ENCODE measurements at regions of chr15 and their contacts with region 1.

Region 1: DNA sequence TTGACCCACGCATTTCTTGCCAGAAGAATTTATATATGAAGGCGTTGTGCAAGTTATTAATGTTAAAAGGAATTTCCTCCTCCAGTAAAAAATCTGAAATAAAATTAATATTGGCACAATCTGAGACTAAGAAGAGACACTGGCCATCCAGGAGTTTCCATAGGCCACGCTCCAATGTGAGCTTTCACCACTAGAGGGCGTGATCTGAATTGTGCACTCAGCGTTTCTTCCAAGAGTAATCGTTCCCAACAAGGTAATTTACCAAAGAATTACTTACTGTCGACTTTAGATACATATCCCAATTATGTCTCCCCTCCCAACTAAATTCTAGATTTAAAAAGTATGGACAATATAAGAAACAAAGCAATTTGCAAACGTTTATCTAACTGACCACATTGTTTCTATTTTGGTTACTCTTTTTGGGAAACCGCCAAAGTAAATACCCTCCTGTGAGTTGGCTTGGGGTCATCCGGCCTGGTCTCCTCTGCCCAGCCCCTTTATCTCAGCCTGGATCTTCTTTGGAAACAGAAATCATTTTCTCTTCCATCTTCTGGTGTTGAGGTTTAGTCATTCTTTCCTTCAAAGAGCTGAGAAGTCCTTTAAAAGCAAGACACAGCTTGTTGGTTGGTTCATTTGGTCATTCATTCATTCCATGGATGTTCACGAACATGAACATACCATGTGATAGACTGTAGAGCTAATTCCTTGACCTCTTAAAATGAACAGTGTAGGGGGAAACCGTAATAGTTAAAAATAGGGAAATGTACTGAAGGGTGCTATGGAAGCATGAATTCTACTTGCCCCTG is 26.2 kb downstream of the POLR2M start:
- DNase-seq: peak in 1 of 2 experiments; percentile 80
- H3K4me3 ChIP-seq: no peak overlapping the region
- H3K27ac ChIP-seq: no peak overlapping the region
- H3K4me1 ChIP-seq: peaks cover 0 to 6% (median 0%) of the 10 kb centered on the region in 4 experiments; a peak in 1 of 7 replicates
- H3K27me3 ChIP-seq: no peaks in the 10 kb centered on the region
- CTCF ChIP-seq: peak; percentile 59 to 83 (median 76)
- EP300 ChIP-seq: no peak
- POLR2A ChIP-seq: no peak
- RAD21 ChIP-seq: peak; percentile 56 to 67

Region 2: GRCh38 chr15:57640935-57641682 is 91.6 kb before region 1 on chr15:
- CTCF ChIA-PET with region 1: interaction called, 10 read pairs
- POLR2A ChIA-PET with region 1: no interaction called
- DNase-seq: no peak
- H3K4me3 ChIP-seq: no peak overlapping the region
- H3K27ac ChIP-seq: no peak overlapping the region
- H3K4me1 ChIP-seq: no peaks in the 10 kb centered on the region
- H3K27me3 ChIP-seq: peaks cover 0 to 3% (median 0%) of the 10 kb centered on the region in 4 experiments; a peak in 2 of 7 replicates
- CTCF ChIP-seq: peak; percentile 50 to 61 (median 59)
- EP300 ChIP-seq: no peak
- POLR2A ChIP-seq: no peak
- RAD21 ChIP-seq: peak; percentile 22 to 45; a peak in 3 of 4 replicates

Region 3: GRCh38 chr15:57706405-57707209 is 26.1 kb before region 1 on chr15 and contains the start of gene POLR2M:
- CTCF ChIA-PET with region 1: interaction called, 15 read pairs
- POLR2A ChIA-PET with region 1: interaction called, 7 read pairs
- DNase-seq: peak; percentile 78 to 82
- H3K4me3 ChIP-seq: peak within 1 kb of the TSS; percentile 93 to 99 (median 96)
- H3K27ac ChIP-seq: peak within 1 kb of the TSS; percentile 85
- H3K4me1 ChIP-seq: peaks cover 0 to 3% (median 3%) of the 10 kb centered on the region in 4 experiments; a peak in 3 of 7 replicates
- H3K27me3 ChIP-seq: peaks cover 0 to 13% (median 5%) of the 10 kb centered on the region in 4 experiments; a peak in 6 of 7 replicates
- CTCF ChIP-seq: no peak
- EP300 ChIP-seq: peak in 1 of 2 experiments; percentile 78; a peak in 1 of 3 replicates
- POLR2A ChIP-seq: peak; percentile 80 to 87
- RAD21 ChIP-seq: no peak
- total RNA-seq, gene POLR2M: 55.1 and 61.7 TPM in 2 replicates

Region 4: GRCh38 chr15:57720867-57721266 is 11.9 kb before region 1 on chr15:
- CTCF ChIA-PET with region 1: interaction called, 10 read pairs
- POLR2A ChIA-PET with region 1: no interaction called
- DNase-seq: no peak
- H3K4me3 ChIP-seq: no peak overlapping the region
- H3K27ac ChIP-seq: no peak overlapping the region
- H3K4me1 ChIP-seq: no peaks in the 10 kb centered on the region
- H3K27me3 ChIP-seq: no peaks in the 10 kb centered on the region
- CTCF ChIP-seq: no peak
- EP300 ChIP-seq: no peak
- POLR2A ChIP-seq: no peak
- RAD21 ChIP-seq: no peak

Region 5: DNA sequence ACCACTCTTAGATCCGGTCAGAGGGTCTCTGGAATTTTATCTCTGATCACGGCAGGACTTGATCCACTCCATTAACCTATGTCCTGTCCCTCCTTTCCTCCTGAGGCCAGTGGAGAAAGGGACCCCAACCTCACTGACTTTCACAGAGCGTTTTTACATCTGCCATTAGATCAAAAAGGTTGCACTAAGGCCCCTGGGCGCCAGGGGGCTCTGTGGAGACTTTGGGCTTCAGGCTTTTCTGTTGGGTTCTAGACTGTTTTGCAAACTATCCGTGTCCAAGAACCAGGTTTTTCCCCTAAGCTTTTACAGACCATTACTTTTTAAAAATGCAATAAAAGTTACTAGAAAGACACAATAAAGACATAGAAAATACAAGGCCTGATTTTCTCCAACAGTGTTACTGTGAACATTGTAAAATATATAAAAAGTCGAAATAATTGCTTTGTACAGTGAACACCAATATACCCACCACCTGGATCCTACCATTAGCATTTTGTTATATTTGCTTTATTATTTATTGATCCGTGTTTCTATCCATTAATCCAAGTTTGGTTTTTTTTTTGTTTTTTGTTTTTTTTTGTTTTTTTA is 133.5 kb after region 1 on chr15:
- CTCF ChIA-PET with region 1: interaction called, 530 read pairs
- POLR2A ChIA-PET with region 1: no interaction called
- DNase-seq: peak; percentile 38 to 87
- H3K4me3 ChIP-seq: no peak overlapping the region
- H3K27ac ChIP-seq: no peak overlapping the region
- H3K4me1 ChIP-seq: no peaks in the 10 kb centered on the region
- H3K27me3 ChIP-seq: no peaks in the 10 kb centered on the region
- CTCF ChIP-seq: peak; percentile 61 to 90 (median 78)
- EP300 ChIP-seq: no peak
- POLR2A ChIP-seq: no peak
- RAD21 ChIP-seq: peak; percentile 64 to 78

Region 6: GRCh38 chr15:57881361-57881760 is 148.6 kb after region 1 on chr15:
- CTCF ChIA-PET with region 1: interaction called, 530 read pairs
- POLR2A ChIA-PET with region 1: no interaction called
- DNase-seq: no peak
- H3K4me3 ChIP-seq: no peak overlapping the region
- H3K27ac ChIP-seq: no peak overlapping the region
- H3K4me1 ChIP-seq: no peaks in the 10 kb centered on the region
- H3K27me3 ChIP-seq: no peaks in the 10 kb centered on the region
- CTCF ChIP-seq: no peak
- EP300 ChIP-seq: no peak
- POLR2A ChIP-seq: no peak
- RAD21 ChIP-seq: no peak

Measured in H1 (cell line).